ENCODE measurements at regions of chr5 and their contacts with region 1.

Region 1: DNA sequence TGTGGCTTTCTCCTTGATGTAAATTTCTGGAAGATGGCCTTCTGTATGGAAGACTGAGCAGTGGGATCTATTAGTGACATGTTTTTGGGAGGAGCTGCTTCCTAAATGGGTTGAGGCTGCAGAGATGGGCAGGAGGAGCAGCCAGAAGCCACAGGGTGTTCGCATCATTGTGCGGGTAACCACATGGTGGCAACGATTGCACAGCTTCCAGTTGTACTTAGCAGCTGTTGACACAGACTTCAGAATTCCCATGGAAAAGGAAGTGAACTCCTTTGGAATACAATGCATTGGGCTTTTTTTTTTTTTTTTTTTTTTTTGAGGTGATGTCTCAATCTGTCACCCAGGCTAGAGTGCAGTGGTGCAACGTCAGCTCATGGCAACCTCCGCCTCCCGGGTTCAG is 297.3 kb downstream of the NR3C1 start:
- DNase-seq: peak; percentile 40 to 89
- ATAC-seq: peak; percentile 93 to 99
- H3K4me3 ChIP-seq: no peak overlapping the region
- H3K27ac ChIP-seq: peak overlapping the region in 1 of 2 experiments; percentile 65; a peak in 3 of 6 replicates
- H3K4me1 ChIP-seq: peaks cover 44% of the 10 kb centered on the region
- CTCF ChIP-seq: peak; percentile 37; the same call in 2 of the 3 replicates
- EP300 ChIP-seq: no peak
- POLR2A ChIP-seq: no peak
- RAD21 ChIP-seq: peak; percentile 70 to 74

Region 2: GRCh38 chr5:143119291-143119769 is 13.2 kb after region 1 on chr5:
- CTCF ChIA-PET with region 1: interaction called, 14 read pairs
- POLR2A ChIA-PET with region 1: no interaction called
- DNase-seq: no peak
- ATAC-seq: no peak
- H3K4me3 ChIP-seq: no peak overlapping the region
- H3K27ac ChIP-seq: 0 out of 6 replicates have a peak overlapping the region, but pooled peaks of 1 of the 2 experiments have one; percentile 6
- H3K4me1 ChIP-seq: no peaks in the 10 kb centered on the region
- CTCF ChIP-seq: no peak
- EP300 ChIP-seq: no peak
- POLR2A ChIP-seq: no peak
- RAD21 ChIP-seq: no peak

Region 3: DNA sequence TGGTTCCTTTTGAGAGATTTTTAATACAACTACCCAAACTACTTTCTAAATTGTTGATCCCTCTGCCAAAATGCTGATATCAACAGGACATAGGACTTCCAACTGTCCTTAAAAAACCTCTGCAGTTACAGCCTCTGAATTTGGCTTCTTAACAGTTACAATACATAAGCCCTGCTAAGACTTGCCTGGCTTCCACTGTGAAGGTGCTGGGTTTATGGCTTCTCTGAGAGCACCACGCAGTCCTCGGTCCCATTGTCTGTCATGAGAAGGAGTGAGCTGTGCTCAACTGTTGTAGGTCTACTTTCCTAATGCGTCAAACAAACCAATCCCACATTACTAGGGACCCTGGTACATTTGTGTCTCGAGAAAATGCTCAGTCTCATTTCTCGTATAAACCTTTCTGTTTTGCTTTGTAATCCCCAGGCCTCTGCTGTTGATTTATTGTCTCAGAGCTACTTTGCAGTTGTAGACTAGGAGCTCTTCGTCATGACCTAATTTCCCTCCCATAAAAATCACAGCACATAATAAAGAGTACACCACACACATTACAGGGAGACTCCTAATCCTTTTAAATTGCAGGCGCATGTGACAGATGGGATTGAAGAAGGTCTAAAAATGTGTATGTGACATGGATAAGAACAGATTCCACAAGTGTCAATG is 22.4 kb after region 1 on chr5:
- CTCF ChIA-PET with region 1: interaction called, 10 read pairs
- POLR2A ChIA-PET with region 1: no interaction called
- DNase-seq: no peak
- ATAC-seq: no peak
- H3K4me3 ChIP-seq: no peak overlapping the region
- H3K27ac ChIP-seq: no peak overlapping the region
- H3K4me1 ChIP-seq: no peaks in the 10 kb centered on the region; the same call in 2 of the 3 replicates
- CTCF ChIP-seq: no peak
- EP300 ChIP-seq: no peak
- POLR2A ChIP-seq: no peak
- RAD21 ChIP-seq: no peak

Measured in A549 (cell line).